Posterior vena cava (tissue), 2 donors: ENCODE measurements at regions of chr7 and their contacts with region 1.

Region 1: GRCh38 chr7:139292821-139293220 is 48.3 kb upstream of the FMC1 start:
- DNase-seq: no peak

Region 2: DNA sequence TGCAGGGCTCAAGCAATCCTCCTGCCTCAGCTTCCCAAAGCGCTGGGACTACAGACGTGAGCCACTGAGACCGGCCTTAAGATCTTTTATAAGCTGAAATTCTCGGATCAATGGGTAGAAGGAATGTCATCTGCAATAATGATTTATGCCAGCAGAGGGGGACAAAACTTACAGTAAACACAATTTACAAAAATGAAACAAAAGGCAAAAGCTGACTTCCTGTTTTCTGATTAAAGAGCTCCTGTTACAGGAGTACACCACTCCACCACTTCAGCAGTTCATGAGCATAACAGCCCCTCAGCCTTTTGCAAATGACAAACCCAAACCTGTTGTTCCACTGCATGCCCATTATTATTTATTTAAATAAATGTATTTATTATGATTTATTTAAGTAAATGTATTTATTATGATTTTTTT is 406.3 kb before region 1 on chr7:
- intact Hi-C with region 1: no loop called
- DNase-seq: no peak

Region 3: GRCh38 chr7:139271718-139272628 is 20.8 kb before region 1 on chr7:
- intact Hi-C with region 1: loop called in 1 of 2 experiments (anchors 1 kb)
- DNase-seq: no peak

Region 4: GRCh38 chr7:141144921-141145629 is 1852.3 kb after region 1 on chr7:
- intact Hi-C with region 1: no loop called
- DNase-seq: no peak